Testis (tissue), 5 donors: ENCODE measurements at regions of chr21 and their contacts with region 1.

Region 1: GRCh38 chr21:17387030-17387617 is 125.7 kb upstream of the CXADR start:
- DNase-seq: peak; percentile 76
- H3K4me3 ChIP-seq: no peak overlapping the region
- H3K27ac ChIP-seq: no peak overlapping the region
- H3K4me1 ChIP-seq: no peaks in the 10 kb centered on the region
- H3K27me3 ChIP-seq: no peaks in the 10 kb centered on the region
- CTCF ChIP-seq: peak; percentile 77 to 96 (median 83)
- POLR2A ChIP-seq: no peak

Region 2: GRCh38 chr21:17585875-17586450 is 198.8 kb after region 1 on chr21:
- intact Hi-C with region 1: loop called (anchors 10 kb)
- DNase-seq: no peak
- H3K4me3 ChIP-seq: no peak overlapping the region
- H3K27ac ChIP-seq: no peak overlapping the region
- H3K4me1 ChIP-seq: peaks cover 6% of the 10 kb centered on the region
- H3K27me3 ChIP-seq: no peaks in the 10 kb centered on the region
- CTCF ChIP-seq: peak; percentile 53 to 60 (median 57)
- POLR2A ChIP-seq: no peak